Esophagus muscularis mucosa (tissue), 4 donors: ENCODE measurements at regions of chr7 and their contacts with region 1.

Region 1: GRCh38 chr7:2555121-2556052 is at the start of gene BRAT1:
- DNase-seq: peak; percentile 99
- H3K4me3 ChIP-seq: peak within 1 kb of the TSS; percentile 64 to 86 (median 84)
- H3K27ac ChIP-seq: peak within 1 kb of the TSS; percentile 90 to 99 (median 96)
- H3K4me1 ChIP-seq: peaks cover 42 to 60% (median 54%) of the 10 kb centered on the region in 4 donors
- H3K27me3 ChIP-seq: no peaks in the 10 kb centered on the region
- CTCF ChIP-seq: peak in 1 of 3 experiments; percentile 57
- EP300 ChIP-seq: no peak
- POLR2A ChIP-seq: no peak
- total RNA-seq, gene BRAT1: 22.0 to 43.8 (median 32.7) TPM

Region 2: GRCh38 chr7:2641406-2642393 is 86.3 kb after region 1 on chr7:
- intact Hi-C with region 1: loop called (anchors 5 kb)
- DNase-seq: peak; percentile 94
- H3K4me3 ChIP-seq: peak overlapping the region; percentile 34 to 52 (median 41)
- H3K27ac ChIP-seq: peak overlapping the region; percentile 71 to 83 (median 80)
- H3K4me1 ChIP-seq: peaks cover 66 to 84% (median 83%) of the 10 kb centered on the region in 4 donors
- H3K27me3 ChIP-seq: no peaks in the 10 kb centered on the region
- CTCF ChIP-seq: peak in 1 of 3 experiments; percentile 15
- EP300 ChIP-seq: no peak
- POLR2A ChIP-seq: no peak